HCT116 (cell line): ENCODE measurements at regions of chr20 and their contacts with region 1.

Region 1: DNA sequence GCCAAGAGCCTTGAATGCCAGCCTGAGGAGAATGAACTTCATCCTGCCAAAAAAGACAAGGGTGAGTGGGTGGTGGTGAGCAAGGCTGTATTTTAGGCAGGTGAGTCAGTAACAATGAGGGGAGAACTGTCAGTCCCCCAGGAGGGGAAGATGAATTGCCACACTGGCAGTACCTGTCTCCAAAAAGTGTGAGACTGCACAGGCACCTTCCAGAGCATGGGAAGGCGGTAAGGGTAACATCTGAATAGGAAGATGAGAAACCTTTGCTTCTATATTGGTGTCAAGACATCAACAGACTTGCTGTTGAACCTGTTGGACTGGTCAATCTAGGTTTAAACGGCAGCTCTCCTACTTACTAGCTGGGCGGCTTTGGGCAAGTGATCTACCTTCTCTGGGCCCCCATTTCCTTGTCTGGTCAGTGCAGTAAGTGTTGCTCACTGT is 30.9 kb downstream of the STK35 start:
- DNase-seq: peak; percentile 19
- ATAC-seq: peak; percentile 60
- H3K4me3 ChIP-seq: peak overlapping the region in 1 of 2 experiments; percentile 28; a peak in 1 of 4 replicates
- H3K27ac ChIP-seq: no peak overlapping the region
- H3K4me1 ChIP-seq: peaks cover 23 to 45% of the 10 kb centered on the region in 2 experiments
- H3K27me3 ChIP-seq: no peaks in the 10 kb centered on the region
- CTCF ChIP-seq: no peak
- POLR2A ChIP-seq: no peak
- RAD21 ChIP-seq: no peak

Region 2: DNA sequence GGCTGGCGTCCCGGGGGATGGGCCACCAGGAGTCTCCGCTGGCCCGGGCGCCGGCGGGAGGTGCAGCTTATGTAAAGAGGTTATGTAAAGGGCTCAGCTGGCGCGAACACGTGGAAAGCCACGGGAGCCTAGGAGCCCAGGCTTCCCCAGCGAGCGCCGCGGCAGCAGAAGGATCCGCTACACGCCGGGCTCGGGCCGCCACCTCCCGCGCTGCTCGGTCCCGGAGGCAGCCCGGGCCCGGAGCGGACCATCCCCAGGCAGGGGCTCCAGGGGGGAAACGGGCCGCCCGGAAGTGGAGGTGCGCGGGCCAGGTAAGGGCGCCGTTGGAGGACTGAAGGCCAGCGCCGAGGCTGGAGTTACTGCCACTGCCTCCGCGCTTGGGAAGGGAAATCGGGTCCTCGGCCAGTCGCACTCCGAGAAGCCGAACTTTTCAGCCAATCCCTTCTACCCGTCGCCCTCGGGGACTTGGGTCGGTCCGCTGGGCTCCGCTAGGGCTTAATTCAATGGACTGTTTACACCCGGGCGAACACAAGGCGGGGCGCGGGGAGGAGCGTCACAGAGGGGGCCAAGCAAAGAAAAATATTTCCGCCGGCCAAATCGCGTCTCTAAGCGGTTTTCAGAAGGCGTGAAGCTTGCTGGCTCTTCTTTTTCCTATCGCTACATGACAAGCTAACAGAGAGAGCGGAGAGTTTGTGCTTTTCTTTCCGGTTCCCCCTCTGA is 30.5 kb before region 1 on chr20:
- CTCF ChIA-PET with region 1: no interaction called
- POLR2A ChIA-PET with region 1: no interaction called
- RAD21 ChIA-PET with region 1: no interaction called
- intact Hi-C with region 1: loop called (anchors 1 kb)
- DNase-seq: peak; percentile 91
- ATAC-seq: peak; percentile 83
- H3K4me3 ChIP-seq: peak overlapping the region; percentile 84 to 97
- H3K27ac ChIP-seq: peak overlapping the region; percentile 95
- H3K4me1 ChIP-seq: peaks cover 15 to 24% of the 10 kb centered on the region in 2 experiments
- H3K27me3 ChIP-seq: no peaks in the 10 kb centered on the region
- CTCF ChIP-seq: no peak
- POLR2A ChIP-seq: peak; percentile 85
- RAD21 ChIP-seq: no peak

Region 3: GRCh38 chr20:2255926-2256531 is 123.5 kb after region 1 on chr20:
- CTCF ChIA-PET with region 1: no interaction called
- POLR2A ChIA-PET with region 1: no interaction called
- RAD21 ChIA-PET with region 1: no interaction called
- intact Hi-C with region 1: no loop called
- DNase-seq: no peak
- ATAC-seq: no peak
- H3K4me3 ChIP-seq: no peak overlapping the region
- H3K27ac ChIP-seq: no peak overlapping the region
- H3K4me1 ChIP-seq: peaks cover 0 to 3% of the 10 kb centered on the region in 2 experiments; a peak in 2 of 4 replicates
- H3K27me3 ChIP-seq: no peaks in the 10 kb centered on the region
- CTCF ChIP-seq: no peak
- POLR2A ChIP-seq: no peak
- RAD21 ChIP-seq: no peak